A549 (cell line): ENCODE measurements at regions of chr10 and their contacts with region 1.

Region 1: GRCh38 chr10:103396064-103396788 is at the starts of genes ATP5MK and PDCD11:
- DNase-seq: peak; percentile 97 to 98
- ATAC-seq: peak; percentile 100
- H3K4me3 ChIP-seq: peak within 1 kb of the TSS; percentile 88
- H3K27ac ChIP-seq: peak within 1 kb of the TSS; percentile 90 to 96
- H3K4me1 ChIP-seq: peaks cover 28% of the 10 kb centered on the region
- CTCF ChIP-seq: no peak
- EP300 ChIP-seq: no peak
- POLR2A ChIP-seq: peak; percentile 94
- RAD21 ChIP-seq: no peak
- polyA plus RNA-seq, gene ATP5MK: 492 and 504 TPM in 2 replicates
- polyA plus RNA-seq, gene PDCD11: 32.6 and 37.5 TPM in 2 replicates

Region 2: GRCh38 chr10:103367782-103368518 is 28.3 kb before region 1 on chr10 and contains the start of gene TAF5:
- CTCF ChIA-PET with region 1: interaction called, 11 read pairs
- POLR2A ChIA-PET with region 1: interaction called, 7 read pairs
- DNase-seq: peak; percentile 85 to 97
- ATAC-seq: peak; percentile 85 to 90
- H3K4me3 ChIP-seq: peak within 1 kb of the TSS; percentile 93
- H3K27ac ChIP-seq: peak within 1 kb of the TSS; percentile 82 to 95
- H3K4me1 ChIP-seq: peaks cover 9% of the 10 kb centered on the region; the same call in 2 of the 3 replicates
- CTCF ChIP-seq: no peak
- EP300 ChIP-seq: no peak
- POLR2A ChIP-seq: peak; percentile 96
- RAD21 ChIP-seq: no peak
- polyA plus RNA-seq, gene TAF5: 4.1 and 5.3 TPM in 2 replicates